BJ (cell line): ENCODE measurements at regions of chr11 and their contacts with region 1.

Region 1: DNA sequence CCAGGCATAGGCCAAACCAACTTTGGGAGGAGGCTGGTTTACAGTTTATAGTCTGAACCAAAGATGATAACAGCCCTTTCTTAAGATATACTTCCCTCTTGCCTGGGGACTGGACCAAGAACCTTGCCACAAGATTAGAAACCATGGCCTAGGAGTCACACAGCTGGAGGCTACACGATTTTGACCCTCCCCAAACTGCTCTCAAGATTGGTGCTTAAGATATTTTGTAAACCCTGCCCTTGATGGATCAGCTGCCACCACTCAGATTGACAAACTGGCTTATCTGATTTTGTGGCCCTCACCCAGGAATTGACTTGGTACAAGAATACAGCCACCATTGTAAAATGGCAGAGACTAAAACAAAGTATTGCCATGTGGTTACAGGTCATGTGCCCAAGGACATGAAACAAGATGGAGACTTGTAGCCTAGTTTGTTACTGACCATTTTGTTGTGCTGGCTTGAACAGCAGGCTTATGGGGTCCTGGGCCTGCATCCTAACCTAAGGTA is 17.4 kb upstream of the EI24 start:
- DNase-seq: no peak
- H3K4me3 ChIP-seq: no peak overlapping the region
- H3K27me3 ChIP-seq: no peaks in the 10 kb centered on the region
- CTCF ChIP-seq: no peak

Region 2: GRCh38 chr11:125451400-125452124 is 100.3 kb before region 1 on chr11:
- CTCF ChIA-PET with region 1: no interaction called
- POLR2A ChIA-PET with region 1: interaction called, 10 read pairs
- DNase-seq: no peak
- H3K4me3 ChIP-seq: no peak overlapping the region
- H3K27me3 ChIP-seq: no peaks in the 10 kb centered on the region
- CTCF ChIP-seq: no peak

Region 3: GRCh38 chr11:125517116-125517804 is 34.6 kb before region 1 on chr11:
- CTCF ChIA-PET with region 1: no interaction called
- POLR2A ChIA-PET with region 1: no interaction called
- DNase-seq: no peak
- H3K4me3 ChIP-seq: no peak overlapping the region
- H3K27me3 ChIP-seq: no peaks in the 10 kb centered on the region; the same call in 1 of the 2 replicates
- CTCF ChIP-seq: no peak